Heart right ventricle (tissue), 16 donors: ENCODE measurements at regions of chr7 and their contacts with region 1.

Region 1: GRCh38 chr7:3154912-3155494 is 111.3 kb upstream of the CARD11 start:
- DNase-seq: no peak
- ATAC-seq: no peak
- H3K4me3 ChIP-seq: no peak overlapping the region
- H3K27ac ChIP-seq: no peak overlapping the region
- H3K4me1 ChIP-seq: no peaks in the 10 kb centered on the region
- H3K27me3 ChIP-seq: peaks cover 0 to 25% (median 8%) of the 10 kb centered on the region in 7 donors
- CTCF ChIP-seq: peak; percentile 19 to 77 (median 53)

Region 2: DNA sequence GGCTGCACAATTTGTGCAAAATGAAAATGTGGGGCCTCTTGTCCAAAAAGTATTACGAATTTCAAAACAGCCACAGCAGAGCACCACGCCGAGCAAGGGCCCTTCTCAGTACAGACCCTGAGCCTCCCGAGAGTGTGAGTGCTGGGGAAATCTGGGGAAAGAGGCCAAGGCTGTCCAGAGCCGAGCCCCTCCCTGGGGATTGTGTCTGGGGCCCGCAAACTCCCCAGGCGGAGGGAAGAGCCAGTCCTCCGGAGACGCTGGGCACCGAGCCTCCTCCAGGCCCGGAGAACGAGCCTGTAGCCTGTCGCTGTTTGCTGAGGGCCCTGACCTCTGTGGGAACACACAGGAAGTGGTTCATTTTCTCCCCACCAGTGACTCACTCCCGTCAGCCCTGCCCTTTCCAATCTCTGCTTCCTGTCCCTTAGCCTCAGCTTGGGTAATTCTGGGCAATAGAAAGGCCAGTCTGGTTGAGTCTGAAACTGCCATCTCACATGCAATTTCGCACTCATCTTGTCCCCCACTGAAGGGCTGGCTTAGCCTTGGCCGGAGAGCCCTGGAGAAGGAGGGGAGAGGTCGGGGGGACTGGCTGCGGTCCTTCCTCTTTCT is 291.4 kb before region 1 on chr7:
- intact Hi-C with region 1: loop called in 3 of 10 experiments (anchors 2 to 5 kb)
- DNase-seq: peak; percentile 81 to 84
- ATAC-seq: peak; percentile 93 to 97 (median 94)
- H3K4me3 ChIP-seq: peak overlapping the region in 6 of 10 donors; percentile 16 to 29 (median 24)
- H3K27ac ChIP-seq: peak overlapping the region; percentile 64 to 96 (median 88)
- H3K4me1 ChIP-seq: peaks cover 0 to 31% (median 20%) of the 10 kb centered on the region in 9 donors
- H3K27me3 ChIP-seq: no peaks in the 10 kb centered on the region
- CTCF ChIP-seq: no peak

Region 3: GRCh38 chr7:2870471-2870931 is 284.5 kb before region 1 on chr7:
- intact Hi-C with region 1: loop called in 4 of 10 experiments (anchors 2 to 5 kb)
- DNase-seq: peak; percentile 73 to 87
- ATAC-seq: peak; percentile 83 to 95 (median 92)
- H3K4me3 ChIP-seq: peak overlapping the region in 6 of 10 donors; percentile 9 to 44 (median 31)
- H3K27ac ChIP-seq: peak overlapping the region in 7 of 10 donors; percentile 19 to 59 (median 47)
- H3K4me1 ChIP-seq: peaks cover 0 to 22% (median 13%) of the 10 kb centered on the region in 9 donors
- H3K27me3 ChIP-seq: peaks cover 0 to 4% (median 0%) of the 10 kb centered on the region in 7 donors
- CTCF ChIP-seq: no peak

Region 4: DNA sequence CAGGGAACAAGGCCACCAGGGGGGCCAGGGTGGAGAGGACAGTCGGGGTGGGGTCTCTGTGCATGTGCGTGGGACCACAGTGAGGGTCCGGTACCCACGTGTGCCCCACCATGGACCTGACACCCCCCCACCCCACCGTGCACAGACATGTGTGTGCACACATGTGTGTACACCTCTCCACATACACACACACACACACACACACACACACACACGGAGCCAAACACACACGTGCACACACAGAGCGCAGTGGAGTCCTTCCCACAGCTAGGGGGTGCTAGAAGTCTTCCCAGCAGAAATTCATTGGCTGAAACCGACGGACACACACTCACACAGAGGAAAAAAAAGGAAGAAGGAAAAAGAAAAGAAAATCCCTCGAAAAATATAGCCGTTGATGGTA is 268.1 kb before region 1 on chr7:
- intact Hi-C with region 1: loop called in 4 of 10 experiments (anchors 2 to 10 kb)
- DNase-seq: peak in 1 of 2 donors; percentile 45
- ATAC-seq: peak in 7 of 8 donors; percentile 42 to 82 (median 68)
- H3K4me3 ChIP-seq: no peak overlapping the region
- H3K27ac ChIP-seq: no peak overlapping the region
- H3K4me1 ChIP-seq: no peaks in the 10 kb centered on the region
- H3K27me3 ChIP-seq: peaks cover 0 to 4% (median 0%) of the 10 kb centered on the region in 7 donors
- CTCF ChIP-seq: peak; percentile 20 to 66 (median 55)

Region 5: GRCh38 chr7:3065724-3066143 is 89.3 kb before region 1 on chr7:
- intact Hi-C with region 1: loop called in 1 of 10 experiments (anchors 10 kb)
- DNase-seq: peak in 1 of 2 donors; percentile 18
- ATAC-seq: no peak
- H3K4me3 ChIP-seq: no peak overlapping the region
- H3K27ac ChIP-seq: no peak overlapping the region
- H3K4me1 ChIP-seq: peaks cover 0 to 4% (median 0%) of the 10 kb centered on the region in 9 donors
- H3K27me3 ChIP-seq: peaks cover 0 to 26% (median 13%) of the 10 kb centered on the region in 7 donors
- CTCF ChIP-seq: peak in 7 of 9 donors; percentile 20 to 56 (median 36)